CD14-positive monocyte (primary cell): ENCODE measurements at regions of chr21 and their contacts with region 1.

Region 1: GRCh38 chr21:34020005-34020847 is 53.2 kb upstream of the MRPS6 start:
- DNase-seq: peak; percentile 44 to 64 (median 54)
- H3K4me3 ChIP-seq: peak overlapping the region in 1 of 3 experiments; percentile 45
- H3K4me3 Mint-ChIP-seq: peak overlapping the region in 1 of 2 donors; percentile 80
- H3K27ac ChIP-seq: peak overlapping the region; percentile 82 to 83
- H3K27ac Mint-ChIP-seq: peak overlapping the region in 6 of 7 donors; percentile 93 to 96 (median 95)
- H3K4me1 ChIP-seq: peaks cover 83 to 92% of the 10 kb centered on the region in 2 donors
- H3K4me1 Mint-ChIP-seq: peaks cover 49% of the 10 kb centered on the region
- H3K27me3 ChIP-seq: no peaks in the 10 kb centered on the region
- H3K27me3 Mint-ChIP-seq: no peaks in the 10 kb centered on the region
- CTCF ChIP-seq: no peak

Region 2: DNA sequence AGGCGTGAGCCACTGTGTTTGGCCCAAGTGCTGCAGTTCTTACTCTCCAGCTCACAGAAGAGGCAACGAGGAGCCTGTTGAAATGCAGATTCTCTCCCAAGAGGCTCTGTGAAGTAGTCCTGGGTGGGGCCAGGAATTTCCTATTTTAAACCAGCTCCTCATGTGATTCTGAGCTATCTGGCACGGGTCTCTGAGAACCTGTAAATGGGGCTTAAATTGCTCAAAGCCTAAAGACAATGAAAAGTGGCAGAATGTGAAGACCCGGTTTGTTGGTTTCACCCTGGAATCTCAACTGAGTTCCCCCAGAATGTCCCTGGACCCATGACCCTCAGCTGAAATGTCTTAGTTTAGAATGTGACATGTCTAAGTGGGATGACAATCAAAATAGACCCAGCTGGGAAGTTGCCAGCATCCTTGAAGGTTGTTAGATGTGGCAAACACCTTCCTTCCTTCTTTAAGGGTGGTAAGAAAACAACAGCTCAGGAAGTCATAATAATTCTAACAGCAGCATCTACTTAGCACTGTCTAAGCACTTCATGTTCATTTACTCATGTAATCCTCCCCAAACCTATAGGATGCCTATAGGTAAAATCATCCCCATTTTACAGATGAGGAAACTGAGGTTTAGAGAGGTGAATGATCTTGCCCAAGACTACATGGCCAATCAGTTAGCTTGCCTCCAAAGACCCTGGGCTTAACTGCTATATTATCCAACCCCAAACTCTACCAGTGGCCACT is 83.8 kb before region 1 on chr21:
- intact Hi-C with region 1: loop called (anchors 5 to 10 kb)
- DNase-seq: peak in 2 of 3 donors; percentile 18 to 37
- H3K4me3 ChIP-seq: no peak overlapping the region
- H3K4me3 Mint-ChIP-seq: no peak overlapping the region
- H3K27ac ChIP-seq: peak overlapping the region in 1 of 2 donors; percentile 45
- H3K27ac Mint-ChIP-seq: peak overlapping the region in 3 of 7 donors; percentile 20 to 86 (median 76)
- H3K4me1 ChIP-seq: peaks cover 34 to 46% of the 10 kb centered on the region in 2 donors
- H3K4me1 Mint-ChIP-seq: peaks cover 60% of the 10 kb centered on the region
- H3K27me3 ChIP-seq: no peaks in the 10 kb centered on the region
- H3K27me3 Mint-ChIP-seq: peaks cover 0 to 2% (median 0%) of the 10 kb centered on the region in 3 donors
- CTCF ChIP-seq: no peak

Region 3: DNA sequence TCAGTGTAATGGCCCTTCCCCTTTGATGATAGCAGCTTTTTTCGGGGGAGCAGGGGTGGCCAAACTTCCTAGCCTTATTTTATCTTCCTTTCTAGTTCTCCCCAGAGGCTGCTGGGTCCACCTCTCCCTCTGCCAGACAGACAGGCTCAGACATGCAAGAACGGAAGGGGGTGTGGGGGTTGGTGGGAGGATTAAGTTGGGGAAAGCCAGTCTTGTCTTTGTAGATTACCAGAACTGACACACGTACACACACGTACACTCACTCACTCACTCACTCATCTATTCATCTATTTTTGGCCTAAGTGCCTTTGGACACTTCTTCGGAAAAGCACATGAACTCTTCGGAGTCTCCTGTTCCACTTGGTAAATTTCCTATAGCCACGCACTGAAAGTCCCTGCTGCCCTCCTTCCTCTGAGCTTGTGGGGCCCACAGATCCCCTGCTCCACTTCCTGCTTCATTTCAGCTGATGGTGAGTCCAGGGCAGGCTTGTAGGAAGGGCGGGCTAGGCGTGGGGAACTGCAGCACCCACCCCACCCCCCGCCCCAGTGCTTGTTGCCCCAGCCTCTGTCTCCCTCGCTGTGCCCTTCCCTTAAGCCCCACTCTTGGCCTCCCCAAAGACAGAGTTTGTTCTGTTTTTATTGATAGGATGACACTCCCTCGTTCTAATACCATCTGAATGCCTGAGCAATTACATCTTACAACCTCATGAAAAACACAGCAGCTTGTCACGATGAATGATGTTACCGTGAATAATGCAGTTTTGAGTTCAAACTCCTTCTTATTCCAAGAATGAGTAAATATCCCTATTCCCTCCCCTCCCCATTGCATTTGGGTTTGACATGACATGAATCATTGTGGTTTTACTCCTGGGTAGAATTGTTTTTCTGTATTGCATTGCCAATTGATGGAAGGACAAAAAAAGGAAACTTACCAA is 43.9 kb before region 1 on chr21:
- intact Hi-C with region 1: loop called (anchors 2 to 5 kb)
- DNase-seq: peak; percentile 67 to 83 (median 72)
- H3K4me3 ChIP-seq: peak overlapping the region in 1 of 3 experiments; percentile 52
- H3K4me3 Mint-ChIP-seq: peak overlapping the region; percentile 49 to 79
- H3K27ac ChIP-seq: peak overlapping the region; percentile 71 to 92
- H3K27ac Mint-ChIP-seq: peak overlapping the region; percentile 87 to 98 (median 92)
- H3K4me1 ChIP-seq: peaks cover 46 to 62% of the 10 kb centered on the region in 2 donors
- H3K4me1 Mint-ChIP-seq: peaks cover 52% of the 10 kb centered on the region
- H3K27me3 ChIP-seq: no peaks in the 10 kb centered on the region
- H3K27me3 Mint-ChIP-seq: peaks cover 0 to 2% (median under 1%) of the 10 kb centered on the region in 3 donors
- CTCF ChIP-seq: no peak

Region 4: GRCh38 chr21:34073032-34073869 is 53.0 kb after region 1 on chr21 and contains the starts of genes MRPS6 and SLC5A3:
- intact Hi-C with region 1: loop called in 1 of 2 experiments (anchors 2 kb)
- DNase-seq: peak; percentile 76 to 78 (median 76)
- H3K4me3 ChIP-seq: peak within 1 kb of the TSS; percentile 70 to 99 (median 82)
- H3K4me3 Mint-ChIP-seq: peak within 1 kb of the TSS; percentile 92 to 96
- H3K27ac ChIP-seq: peak within 1 kb of the TSS; percentile 65 to 71
- H3K27ac Mint-ChIP-seq: peak within 1 kb of the TSS; percentile 67 to 88 (median 83)
- H3K4me1 ChIP-seq: peaks cover 25 to 35% of the 10 kb centered on the region in 2 donors
- H3K4me1 Mint-ChIP-seq: peaks cover 37% of the 10 kb centered on the region
- H3K27me3 ChIP-seq: no peaks in the 10 kb centered on the region
- H3K27me3 Mint-ChIP-seq: peaks cover 2 to 5% (median 3%) of the 10 kb centered on the region in 3 donors
- CTCF ChIP-seq: no peak
- polyA plus RNA-seq, gene MRPS6: 29.8 to 124 (median 101) TPM
- polyA plus RNA-seq, gene SLC5A3: 1.2 to 3.3 (median 1.6) TPM

Region 5: DNA sequence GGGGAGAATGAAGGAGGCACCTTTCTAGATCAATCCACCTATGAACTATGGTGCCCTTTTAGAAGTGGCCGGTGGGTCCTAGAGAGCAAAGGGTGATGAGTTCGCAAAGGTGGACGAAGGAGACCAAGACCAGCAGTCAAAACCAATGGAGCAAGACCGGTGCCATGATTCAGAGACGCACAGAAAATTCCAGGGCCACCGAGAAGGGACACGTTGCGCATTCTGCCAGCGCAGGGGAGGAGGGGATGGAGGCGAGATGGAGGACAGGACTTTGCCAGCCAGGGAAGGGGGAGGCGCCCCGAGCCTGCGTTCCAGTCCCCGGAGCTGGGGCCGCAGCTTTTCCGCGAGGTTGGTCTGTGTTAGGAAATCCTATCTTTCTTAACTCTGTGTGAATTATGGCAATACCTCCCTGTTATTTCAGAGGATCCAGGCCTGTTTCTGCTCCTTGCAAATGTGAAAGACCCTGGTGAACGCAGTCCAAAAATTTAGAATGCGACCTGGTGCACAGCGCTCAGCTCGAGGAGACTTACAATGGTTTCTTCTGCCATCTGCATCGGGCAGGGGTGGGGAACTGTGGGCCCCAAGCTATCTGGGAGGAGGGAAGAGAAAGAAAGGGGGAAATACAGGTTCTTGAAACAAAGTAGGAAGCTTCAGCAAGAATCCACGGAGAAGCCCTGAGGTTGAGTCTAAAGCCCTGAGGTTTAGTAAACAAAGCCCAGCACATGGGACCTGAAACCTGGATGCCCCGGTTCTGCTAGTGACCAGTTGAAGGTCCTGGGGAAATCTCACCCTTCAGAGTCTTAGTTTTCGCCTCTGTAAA is 182.5 kb after region 1 on chr21:
- intact Hi-C with region 1: loop called in 1 of 2 experiments (anchors 5 kb)
- DNase-seq: peak; percentile 24 to 77 (median 52)
- H3K4me3 ChIP-seq: peak overlapping the region; percentile 40 to 76 (median 57)
- H3K4me3 Mint-ChIP-seq: peak overlapping the region; percentile 76 to 90
- H3K27ac ChIP-seq: peak overlapping the region; percentile 84 to 92
- H3K27ac Mint-ChIP-seq: peak overlapping the region; percentile 98 to 99 (median 99)
- H3K4me1 ChIP-seq: peaks cover 90 to 98% of the 10 kb centered on the region in 2 donors
- H3K4me1 Mint-ChIP-seq: peaks cover 93% of the 10 kb centered on the region
- H3K27me3 ChIP-seq: no peaks in the 10 kb centered on the region
- H3K27me3 Mint-ChIP-seq: peaks cover 0 to 2% (median 0%) of the 10 kb centered on the region in 3 donors
- CTCF ChIP-seq: no peak